Right cardiac atrium (tissue), 5 donors: ENCODE measurements at regions of chr14 and their contacts with region 1.

Region 1: GRCh38 chr14:67943947-67944346 is 124.4 kb downstream of the RAD51B start:
- DNase-seq: peak; percentile 59 to 74 (median 71)
- ATAC-seq: peak; percentile 71 to 85
- H3K4me3 ChIP-seq: no peak overlapping the region
- H3K27ac ChIP-seq: no peak overlapping the region
- H3K4me1 ChIP-seq: no peaks in the 10 kb centered on the region
- H3K27me3 ChIP-seq: no peaks in the 10 kb centered on the region

Region 2: GRCh38 chr14:67883717-67884116 is 60.2 kb before region 1 on chr14:
- intact Hi-C with region 1: no loop called
- DNase-seq: no peak
- ATAC-seq: no peak
- H3K4me3 ChIP-seq: no peak overlapping the region
- H3K27ac ChIP-seq: no peak overlapping the region
- H3K4me1 ChIP-seq: peaks cover 1% of the 10 kb centered on the region
- H3K27me3 ChIP-seq: no peaks in the 10 kb centered on the region

Region 3: GRCh38 chr14:68137704-68138619 is 194.0 kb after region 1 on chr14:
- intact Hi-C with region 1: loop called in 1 of 4 experiments (anchors 5 kb)
- DNase-seq: peak in 2 of 3 donors; percentile 29 to 32
- ATAC-seq: peak; percentile 75 to 77
- H3K4me3 ChIP-seq: no peak overlapping the region
- H3K27ac ChIP-seq: no peak overlapping the region
- H3K4me1 ChIP-seq: peaks cover 5% of the 10 kb centered on the region
- H3K27me3 ChIP-seq: no peaks in the 10 kb centered on the region

Region 4: GRCh38 chr14:68239988-68240771 is 296.2 kb after region 1 on chr14:
- intact Hi-C with region 1: loop called in 3 of 4 experiments (anchors 5 to 10 kb)
- DNase-seq: no peak
- ATAC-seq: peak in 1 of 2 donors; percentile 54
- H3K4me3 ChIP-seq: no peak overlapping the region
- H3K27ac ChIP-seq: no peak overlapping the region
- H3K4me1 ChIP-seq: peaks cover 7% of the 10 kb centered on the region
- H3K27me3 ChIP-seq: no peaks in the 10 kb centered on the region

Region 5: GRCh38 chr14:68248481-68249255 is 304.7 kb after region 1 on chr14:
- intact Hi-C with region 1: loop called (anchors 2 to 10 kb)
- DNase-seq: peak; percentile 17 to 69 (median 68)
- ATAC-seq: peak; percentile 71 to 73
- H3K4me3 ChIP-seq: no peak overlapping the region
- H3K27ac ChIP-seq: peak overlapping the region; percentile 77
- H3K4me1 ChIP-seq: peaks cover 20% of the 10 kb centered on the region
- H3K27me3 ChIP-seq: no peaks in the 10 kb centered on the region

Region 6: GRCh38 chr14:68392393-68393141 is 448.6 kb after region 1 on chr14:
- intact Hi-C with region 1: no loop called
- DNase-seq: peak; percentile 63 to 83 (median 79)
- ATAC-seq: peak; percentile 51 to 64
- H3K4me3 ChIP-seq: no peak overlapping the region
- H3K27ac ChIP-seq: peak overlapping the region; percentile 85
- H3K4me1 ChIP-seq: peaks cover 18% of the 10 kb centered on the region
- H3K27me3 ChIP-seq: no peaks in the 10 kb centered on the region

Region 7: DNA sequence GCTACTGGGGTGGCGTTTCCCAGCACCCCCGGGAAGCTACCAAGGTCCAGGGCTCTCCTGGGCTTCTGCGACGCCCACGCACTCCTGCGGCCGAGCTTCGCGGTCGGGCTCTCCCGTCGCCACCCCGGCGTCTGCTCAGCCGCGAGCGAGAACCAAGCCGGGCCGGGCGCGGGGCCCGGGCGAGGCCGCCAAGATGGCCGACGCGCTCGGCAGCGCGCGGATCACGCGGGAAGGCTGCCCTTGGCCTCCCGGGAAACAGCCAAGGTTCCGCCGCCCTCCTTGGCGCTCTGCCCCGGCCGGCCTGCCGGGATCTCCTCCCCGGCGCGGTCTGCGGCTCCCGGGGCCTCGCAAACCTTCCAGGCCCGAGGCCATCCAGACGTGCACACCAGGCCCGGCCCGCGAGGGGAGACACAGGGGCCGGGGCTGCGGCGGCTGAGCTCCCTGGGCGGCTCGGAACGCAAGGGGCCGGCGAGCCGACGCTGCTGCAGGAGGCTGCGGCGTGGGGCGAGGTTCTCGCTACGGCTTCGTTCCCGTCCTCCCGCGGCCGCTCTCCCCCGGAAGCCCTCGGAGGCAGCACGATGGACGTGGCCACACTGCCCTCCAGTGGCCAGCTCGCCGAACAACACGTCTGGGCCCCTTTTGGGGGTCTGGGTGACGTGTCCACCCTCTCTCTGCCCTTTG is 872.5 kb after region 1 on chr14:
- intact Hi-C with region 1: loop called (anchors 2 to 5 kb)
- DNase-seq: peak; percentile 91 to 97 (median 97)
- ATAC-seq: peak; percentile 92 to 94
- H3K4me3 ChIP-seq: peak overlapping the region; percentile 18
- H3K27ac ChIP-seq: peak overlapping the region; percentile 91
- H3K4me1 ChIP-seq: peaks cover 20% of the 10 kb centered on the region
- H3K27me3 ChIP-seq: no peaks in the 10 kb centered on the region

Region 8: GRCh38 chr14:68824517-68825347 is 880.8 kb after region 1 on chr14:
- intact Hi-C with region 1: loop called (anchors 2 to 5 kb)
- DNase-seq: peak; percentile 91 to 97 (median 95)
- ATAC-seq: peak; percentile 94
- H3K4me3 ChIP-seq: no peak overlapping the region
- H3K27ac ChIP-seq: no peak overlapping the region
- H3K4me1 ChIP-seq: no peaks in the 10 kb centered on the region
- H3K27me3 ChIP-seq: no peaks in the 10 kb centered on the region